Activated T-helper 2 cell treated with anti-CD3 and anti-CD28 coated beads, Interferon-gamma antibody, Interleukin-2, Interleukin-4, amounts not matched to agents 10 μg/mL and 5 μg/mL and 100 μg/mL, durations not matched to agents 14 hours and 24 hours and 36 hours (primary cell): ENCODE measurements at regions of chr5 and their contacts with region 1.

Region 1: GRCh38 chr5:52799983-52800393 is 12.3 kb downstream of the ITGA1 start:
- DNase-seq: peak; percentile 95
- H3K4me3 Mint-ChIP-seq: peak overlapping the region; percentile 91
- H3K27ac Mint-ChIP-seq: peak overlapping the region; percentile 92
- H3K4me1 Mint-ChIP-seq: peaks cover 55% of the 10 kb centered on the region
- H3K27me3 Mint-ChIP-seq: peaks cover 6% of the 10 kb centered on the region

Region 2: DNA sequence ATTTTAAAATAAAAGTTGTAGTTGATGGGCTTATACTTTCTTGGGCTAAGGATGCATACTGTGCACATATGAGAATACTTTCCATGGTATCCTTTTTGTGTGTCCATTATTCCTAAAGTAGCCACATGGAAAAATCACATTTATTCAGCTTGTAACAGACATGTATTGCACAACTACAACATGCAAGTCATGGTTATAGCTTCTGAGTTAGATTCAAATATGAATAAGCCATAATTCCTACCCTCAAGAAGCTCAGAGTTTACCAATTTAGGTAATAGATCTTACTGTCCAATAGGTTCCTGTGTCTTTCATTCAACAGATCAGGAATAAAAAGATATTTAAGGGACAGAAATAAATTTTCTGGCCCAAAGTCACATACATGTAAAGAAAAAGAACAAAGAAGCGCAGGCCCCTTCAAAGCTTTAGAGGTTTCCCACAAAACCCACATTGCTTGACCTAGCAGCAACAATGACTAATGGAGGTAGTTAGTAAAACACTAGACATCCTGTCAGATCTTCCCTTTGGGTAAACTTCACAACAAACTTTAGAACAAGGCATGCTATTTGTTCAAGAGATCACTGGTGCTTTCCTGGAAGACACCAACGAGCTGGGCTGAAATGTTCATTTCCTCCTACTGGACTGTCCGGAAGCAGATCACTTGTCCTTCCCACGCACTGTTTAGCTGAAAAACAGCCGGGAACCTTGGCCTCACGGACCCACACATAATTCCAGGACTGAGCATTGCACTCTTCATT is 90.6 kb before region 1 on chr5:
- intact Hi-C with region 1: loop called (anchors 1 kb)
- DNase-seq: no peak
- H3K4me3 Mint-ChIP-seq: no peak overlapping the region
- H3K27ac Mint-ChIP-seq: peak overlapping the region; percentile 23
- H3K4me1 Mint-ChIP-seq: peaks cover 53% of the 10 kb centered on the region
- H3K27me3 Mint-ChIP-seq: peaks cover 4% of the 10 kb centered on the region

Region 3: GRCh38 chr5:52725065-52725746 is 74.8 kb before region 1 on chr5:
- intact Hi-C with region 1: loop called (anchors 1 kb)
- DNase-seq: peak; percentile 73
- H3K4me3 Mint-ChIP-seq: peak overlapping the region; percentile 22
- H3K27ac Mint-ChIP-seq: peak overlapping the region; percentile 40
- H3K4me1 Mint-ChIP-seq: peaks cover 61% of the 10 kb centered on the region
- H3K27me3 Mint-ChIP-seq: no peaks in the 10 kb centered on the region

Region 4: GRCh38 chr5:52743970-52744369 is 56.0 kb before region 1 on chr5:
- intact Hi-C with region 1: loop called (anchors 2 kb)
- DNase-seq: peak; percentile 54
- H3K4me3 Mint-ChIP-seq: peak overlapping the region; percentile 3
- H3K27ac Mint-ChIP-seq: peak overlapping the region; percentile 51
- H3K4me1 Mint-ChIP-seq: peaks cover 59% of the 10 kb centered on the region
- H3K27me3 Mint-ChIP-seq: no peaks in the 10 kb centered on the region

Region 5: GRCh38 chr5:52771343-52772039 is 28.5 kb before region 1 on chr5:
- intact Hi-C with region 1: loop called (anchors 1 kb)
- DNase-seq: peak; percentile 19
- H3K4me3 Mint-ChIP-seq: peak overlapping the region; percentile 14
- H3K27ac Mint-ChIP-seq: peak overlapping the region; percentile 47
- H3K4me1 Mint-ChIP-seq: peaks cover 66% of the 10 kb centered on the region
- H3K27me3 Mint-ChIP-seq: peaks cover 5% of the 10 kb centered on the region

Region 6: GRCh38 chr5:52915176-52915875 is 115.3 kb after region 1 on chr5:
- intact Hi-C with region 1: loop called (anchors 5 kb)
- DNase-seq: peak; percentile 31
- H3K4me3 Mint-ChIP-seq: peak overlapping the region; percentile 34
- H3K27ac Mint-ChIP-seq: no peak overlapping the region
- H3K4me1 Mint-ChIP-seq: peaks cover 4% of the 10 kb centered on the region
- H3K27me3 Mint-ChIP-seq: peaks cover 15% of the 10 kb centered on the region

Region 7: DNA sequence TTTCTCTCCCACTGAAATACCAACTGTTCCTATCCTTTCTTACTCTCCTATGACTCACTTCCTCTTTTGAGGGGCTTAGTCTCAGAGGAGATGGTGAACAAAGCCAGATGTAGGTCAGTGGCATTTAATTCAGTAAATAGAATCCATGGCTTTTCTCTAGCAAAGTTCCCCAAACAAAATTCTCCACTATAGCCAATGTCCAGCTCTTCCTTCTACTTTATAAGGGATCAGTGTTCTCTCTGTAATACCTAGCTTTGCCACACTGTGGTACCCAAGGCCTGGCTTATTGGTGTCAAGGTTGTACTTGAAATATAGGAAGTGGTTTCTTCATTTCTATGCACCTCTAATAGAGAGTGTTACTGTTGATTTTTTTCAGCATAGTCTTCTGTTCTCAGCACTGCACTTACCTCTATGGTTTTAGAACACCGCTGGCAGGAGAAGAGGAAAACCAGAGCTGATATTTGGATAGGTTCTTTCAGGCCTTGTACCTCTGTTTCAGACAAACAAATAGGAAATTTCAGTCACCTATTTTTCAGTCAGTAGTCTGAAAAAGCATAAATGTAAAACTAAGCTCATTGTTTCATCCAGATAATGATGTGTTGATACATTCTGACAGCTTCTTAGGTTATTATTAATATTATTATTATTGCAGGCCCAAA is 148.6 kb after region 1 on chr5:
- intact Hi-C with region 1: no loop called
- DNase-seq: peak; percentile 53
- H3K4me3 Mint-ChIP-seq: no peak overlapping the region
- H3K27ac Mint-ChIP-seq: no peak overlapping the region
- H3K4me1 Mint-ChIP-seq: peaks cover 23% of the 10 kb centered on the region
- H3K27me3 Mint-ChIP-seq: peaks cover 20% of the 10 kb centered on the region